OCI-LY7 (cell line): ENCODE measurements at regions of chr3 and their contacts with region 1.

Region 1: DNA sequence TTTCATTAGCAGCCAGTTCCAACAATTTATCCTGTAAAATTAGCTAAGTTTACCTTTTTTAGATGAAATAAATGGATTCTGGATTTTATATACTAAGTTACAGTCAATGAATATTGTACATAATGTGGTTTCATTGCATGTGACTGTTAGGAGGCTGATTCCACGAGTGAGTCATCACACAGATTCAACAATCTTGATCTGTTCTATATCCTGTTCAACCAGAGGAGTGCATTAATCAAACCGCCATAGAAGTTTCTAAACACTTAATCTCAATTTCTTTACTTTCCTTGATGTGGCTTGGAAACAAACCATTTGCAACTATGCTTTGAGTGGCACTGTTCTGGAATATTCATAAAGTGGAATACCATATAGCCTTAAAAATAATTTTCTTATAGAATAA is 15.3 kb downstream of the DNAJC13 start:
- DNase-seq: no peak
- H3K4me3 ChIP-seq: no peak overlapping the region
- H3K27ac ChIP-seq: no peak overlapping the region
- H3K4me1 ChIP-seq: no peaks in the 10 kb centered on the region
- CTCF ChIP-seq: no peak

Region 2: DNA sequence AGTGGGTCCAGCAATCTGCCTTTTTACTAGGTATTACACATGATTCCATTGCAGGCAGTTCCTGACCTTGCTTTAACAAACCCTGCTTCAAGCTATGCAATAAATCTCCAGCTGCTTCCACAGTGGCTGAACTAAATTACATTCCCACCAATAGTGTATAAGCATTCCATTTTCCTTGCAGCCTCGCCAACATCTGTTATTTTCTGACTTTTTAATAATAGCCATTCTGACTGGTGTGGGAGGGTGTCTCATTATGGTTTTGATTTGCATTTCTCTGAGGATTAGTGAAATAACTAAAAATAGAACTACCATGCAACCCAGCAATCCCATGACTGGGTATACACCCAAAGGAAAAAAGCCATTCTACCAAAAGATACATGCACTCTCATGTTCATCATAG is 51.7 kb before region 1 on chr3:
- CTCF ChIA-PET with region 1: no interaction called
- POLR2A ChIA-PET with region 1: no interaction called
- intact Hi-C with region 1: no loop called
- DNase-seq: no peak
- H3K4me3 ChIP-seq: no peak overlapping the region
- H3K27ac ChIP-seq: no peak overlapping the region
- H3K4me1 ChIP-seq: no peaks in the 10 kb centered on the region
- CTCF ChIP-seq: no peak

Region 3: DNA sequence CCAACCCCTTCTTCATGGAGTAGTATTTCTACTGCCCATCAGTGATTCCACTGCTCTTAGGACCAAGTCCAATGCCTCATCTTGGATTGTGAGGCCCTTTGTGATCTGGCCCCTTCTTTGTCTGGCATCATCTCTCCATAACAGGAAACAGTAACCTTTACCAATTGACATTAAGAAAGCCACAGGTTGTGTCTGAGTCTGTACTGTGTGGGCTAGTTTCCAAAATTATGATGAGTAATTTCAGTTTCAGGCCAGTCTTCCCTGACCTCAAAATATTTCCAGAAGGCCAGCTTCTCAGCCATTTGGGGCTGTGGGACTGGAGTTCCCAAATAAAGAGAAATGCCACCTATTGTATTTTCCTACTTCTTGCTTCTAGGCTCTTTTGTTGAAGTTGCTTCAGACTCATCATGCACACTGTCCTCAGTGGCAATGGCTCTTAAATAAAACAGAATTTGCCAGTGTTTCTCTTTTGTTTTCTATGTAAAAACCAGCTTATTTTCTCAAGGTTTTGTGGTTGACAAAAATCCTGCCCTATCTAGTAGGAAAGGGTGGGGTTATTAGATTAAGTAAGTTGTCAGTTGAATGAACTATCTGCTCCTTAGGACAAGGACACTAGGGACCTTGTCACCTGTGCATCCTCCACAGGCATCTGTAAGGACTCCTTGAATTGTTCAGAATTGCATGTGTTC is 117.4 kb after region 1 on chr3:
- CTCF ChIA-PET with region 1: no interaction called
- POLR2A ChIA-PET with region 1: no interaction called
- intact Hi-C with region 1: no loop called
- DNase-seq: no peak
- H3K4me3 ChIP-seq: no peak overlapping the region
- H3K27ac ChIP-seq: no peak overlapping the region
- H3K4me1 ChIP-seq: peaks cover 12% of the 10 kb centered on the region
- CTCF ChIP-seq: no peak

Region 4: DNA sequence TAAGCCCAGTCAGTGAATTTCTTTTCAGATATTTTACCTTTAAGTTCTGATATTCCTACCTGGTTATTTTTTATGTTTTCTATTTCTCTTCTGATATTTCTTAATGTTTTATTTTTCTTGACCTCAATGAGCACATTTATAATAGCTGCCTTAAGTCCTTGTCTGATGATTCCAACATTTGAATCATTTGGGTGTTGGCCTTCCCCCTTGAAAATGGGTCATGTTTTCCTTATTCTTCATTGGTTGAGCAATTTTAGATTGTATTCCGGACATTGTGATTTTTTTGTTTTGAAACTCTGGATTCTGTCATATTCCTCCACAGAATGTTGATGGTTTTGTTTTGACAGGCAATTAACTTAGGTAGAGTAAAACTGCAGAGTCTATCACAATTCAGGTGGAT is 154.8 kb after region 1 on chr3:
- CTCF ChIA-PET with region 1: no interaction called
- POLR2A ChIA-PET with region 1: no interaction called
- intact Hi-C with region 1: loop called (anchors 5 kb)
- DNase-seq: no peak
- H3K4me3 ChIP-seq: no peak overlapping the region
- H3K27ac ChIP-seq: no peak overlapping the region
- H3K4me1 ChIP-seq: no peaks in the 10 kb centered on the region
- CTCF ChIP-seq: no peak

Region 5: GRCh38 chr3:132669256-132669777 is 236.7 kb after region 1 on chr3:
- CTCF ChIA-PET with region 1: no interaction called
- POLR2A ChIA-PET with region 1: no interaction called
- intact Hi-C with region 1: no loop called
- DNase-seq: no peak
- H3K4me3 ChIP-seq: no peak overlapping the region
- H3K27ac ChIP-seq: no peak overlapping the region
- H3K4me1 ChIP-seq: no peaks in the 10 kb centered on the region
- CTCF ChIP-seq: no peak